K562 (cell line): ENCODE measurements at regions of chr15 and their contacts with region 1.

Region 1: GRCh38 chr15:55649054-55649423 is 60.9 kb upstream of the PYGO1 start:
- DNase-seq: no peak
- ATAC-seq: no peak
- H3K4me3 ChIP-seq: no peak overlapping the region
- H3K27ac ChIP-seq: no peak overlapping the region
- H3K4me1 ChIP-seq: no peaks in the 10 kb centered on the region
- H3K27me3 ChIP-seq: peaks cover 0 to 6% of the 10 kb centered on the region in 2 experiments; a peak in 2 of 5 replicates
- CTCF ChIP-seq: no peak
- EP300 ChIP-seq: no peak
- POLR2A ChIP-seq: no peak
- RAD21 ChIP-seq: no peak

Region 2: GRCh38 chr15:55434989-55435825 is 213.8 kb before region 1 on chr15:
- CTCF ChIA-PET with region 1: no interaction called
- POLR2A ChIA-PET with region 1: no interaction called
- in situ Hi-C with region 1: no loop called
- intact Hi-C with region 1: loop called (anchors 5 kb)
- DNase-seq: peak; percentile 33 to 76 (median 48)
- ATAC-seq: peak; percentile 96
- H3K4me3 ChIP-seq: no peak overlapping the region
- H3K27ac ChIP-seq: no peak overlapping the region
- H3K4me1 ChIP-seq: no peaks in the 10 kb centered on the region; a peak in 1 of 5 replicates
- H3K27me3 ChIP-seq: no peaks in the 10 kb centered on the region
- CTCF ChIP-seq: peak; percentile 55 to 77 (median 69); a peak in 5 of 6 replicates
- EP300 ChIP-seq: no peak
- POLR2A ChIP-seq: no peak
- RAD21 ChIP-seq: peak; percentile 75 to 85

Region 3: GRCh38 chr15:55514414-55514850 is 134.6 kb before region 1 on chr15:
- CTCF ChIA-PET with region 1: no interaction called
- POLR2A ChIA-PET with region 1: no interaction called
- in situ Hi-C with region 1: no loop called
- intact Hi-C with region 1: loop called (anchors 5 kb)
- DNase-seq: no peak
- ATAC-seq: no peak
- H3K4me3 ChIP-seq: no peak overlapping the region
- H3K27ac ChIP-seq: no peak overlapping the region
- H3K4me1 ChIP-seq: peaks cover 0 to 7% of the 10 kb centered on the region in 2 experiments; a peak in 3 of 5 replicates
- H3K27me3 ChIP-seq: no peaks in the 10 kb centered on the region
- CTCF ChIP-seq: no peak
- EP300 ChIP-seq: no peak
- POLR2A ChIP-seq: no peak
- RAD21 ChIP-seq: no peak

Region 4: DNA sequence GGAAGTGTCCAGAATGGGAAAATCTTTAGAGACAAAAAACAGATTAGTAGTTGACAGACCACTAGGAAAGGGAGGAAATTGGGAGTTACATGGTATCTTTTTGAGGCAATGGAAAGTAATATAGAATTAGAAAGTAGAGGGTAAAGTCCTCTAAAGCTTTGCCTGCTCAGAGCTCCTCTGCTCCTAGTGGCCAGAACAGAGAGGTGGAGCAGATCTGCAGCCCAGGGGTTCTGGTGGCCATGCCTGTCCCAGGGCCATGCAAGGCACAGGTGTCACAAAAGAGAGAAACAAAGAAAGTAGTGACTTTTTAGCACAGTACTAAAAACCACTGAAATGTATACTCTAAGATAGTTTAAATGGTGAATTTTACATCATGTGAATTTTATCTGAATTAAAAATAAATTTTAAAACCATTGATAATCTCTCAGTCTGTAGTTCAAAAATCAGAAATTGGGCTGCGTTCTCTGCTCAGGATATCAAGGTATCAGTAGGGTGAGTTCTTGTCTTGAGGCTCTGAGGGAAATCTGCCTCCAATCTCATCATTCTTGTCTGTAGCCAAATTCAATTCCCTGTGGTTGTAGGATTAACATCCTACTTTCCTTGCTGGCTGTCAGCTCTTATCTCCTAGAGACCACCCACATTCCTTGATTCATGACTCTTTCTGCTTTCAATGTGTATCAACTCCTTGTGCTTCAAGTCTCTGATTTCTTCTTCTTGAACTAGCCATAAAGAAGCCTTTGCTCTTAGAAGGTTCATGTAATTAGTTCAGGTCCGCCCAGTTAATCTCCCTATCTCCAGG is 84.5 kb before region 1 on chr15:
- CTCF ChIA-PET with region 1: no interaction called
- POLR2A ChIA-PET with region 1: no interaction called
- in situ Hi-C with region 1: no loop called
- intact Hi-C with region 1: no loop called
- DNase-seq: peak in 1 of 4 experiments; percentile 10
- ATAC-seq: peak; percentile 87
- H3K4me3 ChIP-seq: no peak overlapping the region
- H3K27ac ChIP-seq: no peak overlapping the region
- H3K4me1 ChIP-seq: no peaks in the 10 kb centered on the region
- H3K27me3 ChIP-seq: no peaks in the 10 kb centered on the region
- CTCF ChIP-seq: peak; percentile 13 to 41 (median 32); a peak in 2 of 6 replicates
- EP300 ChIP-seq: no peak
- POLR2A ChIP-seq: no peak
- RAD21 ChIP-seq: no peak

Region 5: DNA sequence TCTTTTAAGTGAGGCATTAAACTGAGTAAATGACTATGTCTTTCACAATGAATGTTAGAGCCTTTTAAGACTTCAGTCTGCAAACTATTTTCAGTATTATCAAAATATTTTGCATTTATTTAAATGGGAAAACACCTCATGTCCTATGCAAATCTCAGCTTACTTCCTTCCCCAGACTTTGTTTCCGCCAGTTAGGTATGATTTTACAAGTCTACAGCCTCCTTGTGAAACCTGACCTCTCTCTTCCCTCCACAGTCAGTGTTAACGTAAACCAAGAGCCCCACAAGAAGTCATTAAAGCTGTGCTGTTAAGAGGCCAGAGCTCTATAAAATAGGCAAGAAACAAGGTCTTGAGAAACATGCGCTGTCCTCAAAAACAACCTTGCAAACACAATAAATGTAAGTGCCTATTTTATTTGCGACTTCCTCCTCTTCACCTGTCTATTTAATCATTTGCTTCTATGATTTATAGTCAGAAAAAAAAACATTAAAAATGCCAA is 45.7 kb after region 1 on chr15:
- CTCF ChIA-PET with region 1: no interaction called
- POLR2A ChIA-PET with region 1: no interaction called
- in situ Hi-C with region 1: no loop called
- intact Hi-C with region 1: no loop called
- DNase-seq: no peak
- ATAC-seq: no peak
- H3K4me3 ChIP-seq: no peak overlapping the region
- H3K27ac ChIP-seq: no peak overlapping the region
- H3K4me1 ChIP-seq: no peaks in the 10 kb centered on the region
- H3K27me3 ChIP-seq: peaks cover 0 to 10% of the 10 kb centered on the region in 2 experiments; a peak in 2 of 5 replicates
- CTCF ChIP-seq: no peak
- EP300 ChIP-seq: no peak
- POLR2A ChIP-seq: no peak
- RAD21 ChIP-seq: no peak

Region 6: GRCh38 chr15:55799291-55800212 is 150.5 kb after region 1 on chr15:
- CTCF ChIA-PET with region 1: no interaction called
- POLR2A ChIA-PET with region 1: no interaction called
- in situ Hi-C with region 1: no loop called
- intact Hi-C with region 1: loop called (anchors 1 kb)
- DNase-seq: peak; percentile 38 to 60 (median 48)
- ATAC-seq: peak; percentile 91
- H3K4me3 ChIP-seq: no peak overlapping the region
- H3K27ac ChIP-seq: no peak overlapping the region
- H3K4me1 ChIP-seq: no peaks in the 10 kb centered on the region
- H3K27me3 ChIP-seq: no peaks in the 10 kb centered on the region; a peak in 1 of 5 replicates
- CTCF ChIP-seq: peak; percentile 64 to 74 (median 66)
- EP300 ChIP-seq: no peak
- POLR2A ChIP-seq: no peak
- RAD21 ChIP-seq: peak; percentile 49 to 82

Region 7: DNA sequence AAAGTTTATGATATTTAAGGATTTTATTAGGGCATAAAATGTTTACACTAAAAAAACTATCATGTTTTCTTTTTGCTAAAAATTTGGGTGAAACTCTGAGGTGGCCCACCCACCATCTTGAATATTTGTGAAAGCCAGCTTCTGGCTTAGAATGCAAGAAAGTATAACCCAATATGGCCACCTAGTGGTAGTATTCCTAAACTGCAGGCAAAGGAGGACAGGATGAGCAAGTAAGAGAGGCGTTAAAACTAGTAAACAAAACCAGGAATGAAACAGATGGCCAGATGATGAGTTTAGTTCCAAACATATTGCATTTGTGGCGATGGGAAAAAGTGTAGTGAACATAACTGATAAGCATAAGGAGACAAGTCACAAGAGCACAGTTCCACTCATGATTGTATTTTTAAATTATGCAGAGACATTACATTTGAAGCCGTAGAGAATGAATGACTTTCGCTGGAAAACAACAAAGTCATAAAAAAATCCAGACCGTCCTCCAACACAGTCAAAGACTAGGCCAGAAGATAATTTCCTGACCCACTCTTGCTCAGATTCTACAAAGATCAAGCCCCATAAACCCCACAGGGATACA is 197.2 kb after region 1 on chr15:
- CTCF ChIA-PET with region 1: interaction called, 11 read pairs
- POLR2A ChIA-PET with region 1: no interaction called
- in situ Hi-C with region 1: no loop called
- intact Hi-C with region 1: loop called (anchors 1 kb)
- DNase-seq: peak; percentile 50 to 78 (median 71)
- ATAC-seq: peak; percentile 91
- H3K4me3 ChIP-seq: no peak overlapping the region
- H3K27ac ChIP-seq: no peak overlapping the region
- H3K4me1 ChIP-seq: no peaks in the 10 kb centered on the region
- H3K27me3 ChIP-seq: no peaks in the 10 kb centered on the region
- CTCF ChIP-seq: peak; percentile 68 to 79 (median 72)
- EP300 ChIP-seq: no peak
- POLR2A ChIP-seq: no peak
- RAD21 ChIP-seq: peak; percentile 49 to 65; a peak in 3 of 4 replicates

Region 8: GRCh38 chr15:56245871-56246814 is 597.1 kb after region 1 on chr15:
- CTCF ChIA-PET with region 1: no interaction called
- POLR2A ChIA-PET with region 1: no interaction called
- in situ Hi-C with region 1: no loop called
- intact Hi-C with region 1: loop called (anchors 5 kb)
- DNase-seq: peak; percentile 79 to 94 (median 82)
- ATAC-seq: peak; percentile 79
- H3K4me3 ChIP-seq: peak overlapping the region; percentile 78
- H3K27ac ChIP-seq: peak overlapping the region; percentile 86
- H3K4me1 ChIP-seq: peaks cover 16 to 29% of the 10 kb centered on the region in 2 experiments
- H3K27me3 ChIP-seq: no peaks in the 10 kb centered on the region
- CTCF ChIP-seq: peak; percentile 100
- EP300 ChIP-seq: peak; percentile 66
- POLR2A ChIP-seq: peak; percentile 82
- RAD21 ChIP-seq: peak; percentile 94 to 96

Region 9: GRCh38 chr15:56428821-56429458 is 779.9 kb after region 1 on chr15:
- CTCF ChIA-PET with region 1: interaction called, 4 read pairs
- POLR2A ChIA-PET with region 1: no interaction called
- in situ Hi-C with region 1: no loop called
- intact Hi-C with region 1: loop called (anchors 5 kb)
- DNase-seq: peak; percentile 8 to 36 (median 16)
- ATAC-seq: 0 out of 3 replicates have a peak, but pooled peaks have one; percentile 60
- H3K4me3 ChIP-seq: no peak overlapping the region
- H3K27ac ChIP-seq: no peak overlapping the region
- H3K4me1 ChIP-seq: no peaks in the 10 kb centered on the region
- H3K27me3 ChIP-seq: no peaks in the 10 kb centered on the region
- CTCF ChIP-seq: peak in 2 of 3 experiments; percentile 45 to 80; a peak in 4 of 6 replicates
- EP300 ChIP-seq: no peak
- POLR2A ChIP-seq: no peak
- RAD21 ChIP-seq: peak; percentile 81 to 97